Activated CD4-positive, alpha-beta T cell treated with anti-CD3 and anti-CD28 coated beads for 36 hours (primary cell): ENCODE measurements at regions of chr12 and their contacts with region 1.

Region 1: DNA sequence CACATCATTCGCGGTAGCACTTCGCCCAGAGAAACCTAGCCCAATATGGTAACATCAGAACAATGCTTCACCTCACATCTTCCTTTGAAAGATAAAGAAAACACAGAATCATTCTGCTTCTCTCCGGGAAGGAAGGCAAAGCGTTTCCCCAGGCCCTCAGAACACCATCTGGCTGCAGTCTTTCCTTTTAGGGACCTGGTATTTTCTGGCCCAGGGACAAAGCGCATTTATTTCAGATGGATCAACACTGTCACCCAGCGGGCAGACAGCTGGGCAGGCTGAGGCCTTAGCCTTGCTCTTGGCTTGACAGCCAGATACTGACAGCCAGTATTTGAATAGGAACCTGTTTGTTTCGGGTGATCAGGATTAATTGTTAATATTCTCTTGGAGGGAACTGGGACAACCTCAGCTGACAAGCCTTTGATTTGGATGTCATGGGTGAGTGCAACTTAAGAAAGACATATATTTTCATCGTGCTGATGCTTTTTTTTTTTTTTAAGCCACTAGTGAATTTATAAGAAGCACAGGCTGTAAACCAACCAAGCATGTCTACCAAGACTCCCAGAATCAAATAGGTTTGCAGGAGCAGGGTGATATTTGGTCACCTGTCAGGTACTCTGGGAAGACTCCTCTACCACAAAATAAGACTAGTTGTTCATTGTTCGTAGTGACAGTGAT is 118.9 kb downstream of the VEZT start:
- DNase-seq: no peak
- ATAC-seq: no peak
- H3K4me3 Mint-ChIP-seq: no peak overlapping the region
- H3K27ac Mint-ChIP-seq: no peak overlapping the region
- H3K4me1 Mint-ChIP-seq: peaks cover 5% of the 10 kb centered on the region
- H3K27me3 Mint-ChIP-seq: no peaks in the 10 kb centered on the region

Region 2: GRCh38 chr12:95117178-95117599 is 219.3 kb before region 1 on chr12:
- CTCF ChIA-PET with region 1: no interaction called
- POLR2A ChIA-PET with region 1: no interaction called
- intact Hi-C with region 1: loop called (anchors 1 to 10 kb)
- DNase-seq: peak; percentile 75
- ATAC-seq: peak; percentile 76
- H3K4me3 Mint-ChIP-seq: no peak overlapping the region
- H3K27ac Mint-ChIP-seq: no peak overlapping the region
- H3K4me1 Mint-ChIP-seq: peaks cover 4% of the 10 kb centered on the region
- H3K27me3 Mint-ChIP-seq: no peaks in the 10 kb centered on the region